B cell (primary cell): ENCODE measurements at regions of chr15 and their contacts with region 1.

Region 1: GRCh38 chr15:40906091-40906990 is 12.1 kb downstream of the VPS18 start:
- DNase-seq: peak; percentile 93
- ATAC-seq: peak; percentile 77
- H3K4me3 ChIP-seq: peak overlapping the region; percentile 46 to 95 (median 83)
- H3K4me3 Mint-ChIP-seq: peak overlapping the region; percentile 93
- H3K27ac ChIP-seq: peak overlapping the region; percentile 98 to 99
- H3K27ac Mint-ChIP-seq: peak overlapping the region; percentile 98
- H3K4me1 ChIP-seq: peaks cover 30 to 60% of the 10 kb centered on the region in 2 donors
- H3K4me1 Mint-ChIP-seq: peaks cover 48% of the 10 kb centered on the region
- H3K27me3 ChIP-seq: no peaks in the 10 kb centered on the region
- H3K27me3 Mint-ChIP-seq: no peaks in the 10 kb centered on the region
- CTCF ChIP-seq: peak; percentile 98

Region 2: GRCh38 chr15:40917585-40917984 is 11.2 kb after region 1 on chr15:
- CTCF ChIA-PET with region 1: interaction called, 84 read pairs
- POLR2A ChIA-PET with region 1: interaction called, 10 read pairs
- intact Hi-C with region 1: no loop called
- DNase-seq: no peak
- ATAC-seq: no peak
- H3K4me3 ChIP-seq: no peak overlapping the region
- H3K4me3 Mint-ChIP-seq: no peak overlapping the region
- H3K27ac ChIP-seq: no peak overlapping the region
- H3K27ac Mint-ChIP-seq: no peak overlapping the region
- H3K4me1 ChIP-seq: no peaks in the 10 kb centered on the region
- H3K4me1 Mint-ChIP-seq: no peaks in the 10 kb centered on the region
- H3K27me3 ChIP-seq: no peaks in the 10 kb centered on the region
- H3K27me3 Mint-ChIP-seq: no peaks in the 10 kb centered on the region
- CTCF ChIP-seq: no peak

Region 3: DNA sequence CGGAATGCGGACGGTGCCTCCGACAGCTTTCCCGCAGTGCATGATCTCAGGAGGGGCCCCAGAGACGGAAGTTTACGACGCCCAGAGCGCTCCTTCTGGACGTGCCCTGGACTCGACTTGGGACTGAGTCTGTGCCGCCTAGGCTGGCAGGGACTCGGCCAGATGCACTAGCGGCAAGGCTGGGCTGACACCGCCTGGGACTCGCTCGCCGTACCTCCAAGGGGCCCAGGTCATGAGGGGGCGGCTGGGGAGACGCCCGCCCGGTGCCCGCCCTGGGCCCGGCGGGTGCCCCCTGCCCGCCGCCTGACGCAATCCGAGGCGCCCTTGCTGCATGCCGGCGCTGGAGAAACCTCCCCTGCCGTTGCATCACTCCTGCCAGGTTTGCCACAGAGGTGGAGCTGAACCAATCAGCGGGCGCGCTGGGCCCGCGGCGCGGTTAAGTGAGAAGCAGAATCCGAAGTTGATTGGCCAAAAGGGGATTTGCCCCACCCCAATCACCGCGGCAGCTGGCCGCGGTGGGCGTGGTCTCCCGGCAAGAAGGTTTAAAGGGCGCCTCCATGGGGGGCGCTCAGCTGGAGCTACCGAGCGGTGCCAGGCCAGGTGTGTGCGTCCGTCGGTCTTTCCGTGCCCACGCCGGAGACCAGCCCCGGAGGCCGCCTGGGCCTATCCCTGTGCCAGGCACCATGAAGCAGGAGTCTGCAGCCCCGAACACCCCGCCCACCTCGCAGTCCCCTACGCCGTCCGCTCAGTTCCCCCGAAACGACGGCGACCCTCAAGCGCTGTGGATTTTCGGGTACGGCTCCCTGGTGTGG is 46.8 kb after region 1 on chr15 and contains the start of gene CHAC1:
- CTCF ChIA-PET with region 1: interaction called, 19 read pairs
- POLR2A ChIA-PET with region 1: no interaction called
- intact Hi-C with region 1: loop called (anchors 1 kb)
- DNase-seq: peak; percentile 95
- ATAC-seq: peak; percentile 97
- H3K4me3 ChIP-seq: peak within 1 kb of the TSS; percentile 40 to 74 (median 64)
- H3K4me3 Mint-ChIP-seq: peak within 1 kb of the TSS; percentile 93
- H3K27ac ChIP-seq: peak within 1 kb of the TSS in 1 of 2 donors; percentile 25
- H3K27ac Mint-ChIP-seq: peak within 1 kb of the TSS; percentile 84
- H3K4me1 ChIP-seq: peaks cover 9 to 14% of the 10 kb centered on the region in 2 donors
- H3K4me1 Mint-ChIP-seq: peaks cover 18% of the 10 kb centered on the region
- H3K27me3 ChIP-seq: peaks cover 0 to 14% (median 2%) of the 10 kb centered on the region in 4 experiments
- H3K27me3 Mint-ChIP-seq: peaks cover 9% of the 10 kb centered on the region
- CTCF ChIP-seq: no peak
- total RNA-seq, gene CHAC1: 3.1 and 3.6 TPM in 2 replicates

Region 4: GRCh38 chr15:41073028-41073427 is 166.7 kb after region 1 on chr15:
- CTCF ChIA-PET with region 1: no interaction called
- POLR2A ChIA-PET with region 1: no interaction called
- intact Hi-C with region 1: no loop called
- DNase-seq: no peak
- ATAC-seq: no peak
- H3K4me3 ChIP-seq: no peak overlapping the region
- H3K4me3 Mint-ChIP-seq: no peak overlapping the region
- H3K27ac ChIP-seq: no peak overlapping the region
- H3K27ac Mint-ChIP-seq: no peak overlapping the region
- H3K4me1 ChIP-seq: no peaks in the 10 kb centered on the region
- H3K4me1 Mint-ChIP-seq: no peaks in the 10 kb centered on the region
- H3K27me3 ChIP-seq: no peaks in the 10 kb centered on the region
- H3K27me3 Mint-ChIP-seq: no peaks in the 10 kb centered on the region
- CTCF ChIP-seq: no peak

Region 5: GRCh38 chr15:41116116-41116871 is 210.0 kb after region 1 on chr15 and contains the start of gene INO80:
- CTCF ChIA-PET with region 1: interaction called, 6 read pairs
- POLR2A ChIA-PET with region 1: interaction called, 13 read pairs
- intact Hi-C with region 1: loop called (anchors 1 kb)
- DNase-seq: peak; percentile 98
- ATAC-seq: peak; percentile 66
- H3K4me3 ChIP-seq: peak within 1 kb of the TSS; percentile 73 to 92 (median 80)
- H3K4me3 Mint-ChIP-seq: peak within 1 kb of the TSS; percentile 100
- H3K27ac ChIP-seq: peak within 1 kb of the TSS; percentile 93
- H3K27ac Mint-ChIP-seq: peak within 1 kb of the TSS; percentile 100
- H3K4me1 ChIP-seq: peaks cover 16 to 17% of the 10 kb centered on the region in 2 donors
- H3K4me1 Mint-ChIP-seq: peaks cover 26% of the 10 kb centered on the region
- H3K27me3 ChIP-seq: no peaks in the 10 kb centered on the region
- H3K27me3 Mint-ChIP-seq: no peaks in the 10 kb centered on the region
- CTCF ChIP-seq: no peak
- total RNA-seq, gene INO80: 55.7 and 57.8 TPM in 2 replicates

Region 6: GRCh38 chr15:41283653-41284426 is 377.5 kb after region 1 on chr15:
- CTCF ChIA-PET with region 1: no interaction called
- POLR2A ChIA-PET with region 1: no interaction called
- intact Hi-C with region 1: loop called (anchors 2 kb)
- DNase-seq: peak; percentile 99
- ATAC-seq: peak; percentile 98
- H3K4me3 ChIP-seq: peak overlapping the region; percentile 86 to 97 (median 94)
- H3K4me3 Mint-ChIP-seq: peak overlapping the region; percentile 95
- H3K27ac ChIP-seq: peak overlapping the region; percentile 86 to 90
- H3K27ac Mint-ChIP-seq: peak overlapping the region; percentile 97
- H3K4me1 ChIP-seq: peaks cover 16 to 33% of the 10 kb centered on the region in 2 donors
- H3K4me1 Mint-ChIP-seq: peaks cover 42% of the 10 kb centered on the region
- H3K27me3 ChIP-seq: no peaks in the 10 kb centered on the region
- H3K27me3 Mint-ChIP-seq: no peaks in the 10 kb centered on the region
- CTCF ChIP-seq: no peak

Region 7: GRCh38 chr15:41465822-41466421 is 559.6 kb after region 1 on chr15:
- CTCF ChIA-PET with region 1: interaction called, 5 read pairs
- POLR2A ChIA-PET with region 1: no interaction called
- intact Hi-C with region 1: loop called (anchors 5 kb)
- DNase-seq: peak; percentile 60
- ATAC-seq: peak; percentile 54
- H3K4me3 ChIP-seq: no peak overlapping the region
- H3K4me3 Mint-ChIP-seq: no peak overlapping the region
- H3K27ac ChIP-seq: no peak overlapping the region
- H3K27ac Mint-ChIP-seq: no peak overlapping the region
- H3K4me1 ChIP-seq: no peaks in the 10 kb centered on the region
- H3K4me1 Mint-ChIP-seq: peaks cover 5% of the 10 kb centered on the region
- H3K27me3 ChIP-seq: no peaks in the 10 kb centered on the region
- H3K27me3 Mint-ChIP-seq: no peaks in the 10 kb centered on the region
- CTCF ChIP-seq: peak; percentile 95

Region 8: DNA sequence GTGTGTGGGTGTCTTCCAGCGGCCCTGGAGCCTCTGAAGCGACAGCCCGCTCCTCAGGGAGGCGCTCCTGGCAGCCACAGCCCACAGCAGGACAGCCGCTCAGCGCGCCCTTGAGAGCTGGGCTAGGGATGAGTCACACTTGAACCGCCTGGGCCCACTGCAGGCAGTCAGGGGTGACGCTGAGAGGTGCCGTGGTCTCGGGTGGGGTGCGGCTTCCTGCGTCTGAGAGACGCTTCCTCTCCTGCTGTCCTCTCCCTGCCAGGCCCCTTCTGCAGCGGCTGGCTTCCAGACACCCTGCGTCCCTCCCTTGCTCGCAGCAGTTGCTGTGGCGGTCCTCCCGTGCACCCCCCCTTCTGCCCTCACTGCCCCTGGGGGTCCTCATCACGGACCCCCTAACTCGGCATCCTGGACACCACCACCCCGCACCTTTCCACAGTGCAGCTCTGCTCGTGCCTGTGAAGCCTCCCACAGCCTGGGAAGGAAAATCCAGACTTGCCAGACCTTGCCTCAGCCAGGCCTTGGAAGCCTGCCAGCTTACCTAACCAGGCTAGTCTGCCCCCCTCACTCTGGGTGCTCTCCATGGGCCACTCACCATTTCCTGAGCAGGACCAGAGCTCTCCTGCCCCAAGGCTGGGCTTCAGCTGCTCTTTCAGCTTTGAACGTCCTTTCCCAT is 988.6 kb after region 1 on chr15:
- CTCF ChIA-PET with region 1: no interaction called
- POLR2A ChIA-PET with region 1: no interaction called
- intact Hi-C with region 1: loop called (anchors 10 kb)
- DNase-seq: peak; percentile 84
- ATAC-seq: peak; percentile 98
- H3K4me3 ChIP-seq: peak overlapping the region in 4 of 5 experiments; percentile 10 to 47 (median 30)
- H3K4me3 Mint-ChIP-seq: peak overlapping the region; percentile 84
- H3K27ac ChIP-seq: peak overlapping the region; percentile 71 to 80
- H3K27ac Mint-ChIP-seq: peak overlapping the region; percentile 97
- H3K4me1 ChIP-seq: peaks cover 37 to 41% of the 10 kb centered on the region in 2 donors
- H3K4me1 Mint-ChIP-seq: peaks cover 40% of the 10 kb centered on the region
- H3K27me3 ChIP-seq: no peaks in the 10 kb centered on the region
- H3K27me3 Mint-ChIP-seq: no peaks in the 10 kb centered on the region
- CTCF ChIP-seq: no peak